ENCODE measurements at regions of chr12 and their contacts with region 1.

Region 1: GRCh38 chr12:53079226-53080117 is at the start of gene SPRYD3:
- DNase-seq: peak; percentile 98
- H3K4me3 Mint-ChIP-seq: peak within 1 kb of the TSS; percentile 86
- H3K27ac Mint-ChIP-seq: peak within 1 kb of the TSS; percentile 83
- H3K4me1 Mint-ChIP-seq: peaks cover 38% of the 10 kb centered on the region
- H3K27me3 Mint-ChIP-seq: no peaks in the 10 kb centered on the region
- total RNA-seq, gene SPRYD3: 31.2 to 31.3 TPM

Region 2: GRCh38 chr12:53054112-53054833 is 25.2 kb before region 1 on chr12:
- CTCF ChIA-PET with region 1: interaction called, 13 read pairs
- POLR2A ChIA-PET with region 1: interaction called, 6 read pairs
- DNase-seq: peak; percentile 94
- H3K4me3 Mint-ChIP-seq: peak overlapping the region; percentile 87
- H3K27ac Mint-ChIP-seq: peak overlapping the region; percentile 77
- H3K4me1 Mint-ChIP-seq: peaks cover 14% of the 10 kb centered on the region
- H3K27me3 Mint-ChIP-seq: no peaks in the 10 kb centered on the region

Region 3: DNA sequence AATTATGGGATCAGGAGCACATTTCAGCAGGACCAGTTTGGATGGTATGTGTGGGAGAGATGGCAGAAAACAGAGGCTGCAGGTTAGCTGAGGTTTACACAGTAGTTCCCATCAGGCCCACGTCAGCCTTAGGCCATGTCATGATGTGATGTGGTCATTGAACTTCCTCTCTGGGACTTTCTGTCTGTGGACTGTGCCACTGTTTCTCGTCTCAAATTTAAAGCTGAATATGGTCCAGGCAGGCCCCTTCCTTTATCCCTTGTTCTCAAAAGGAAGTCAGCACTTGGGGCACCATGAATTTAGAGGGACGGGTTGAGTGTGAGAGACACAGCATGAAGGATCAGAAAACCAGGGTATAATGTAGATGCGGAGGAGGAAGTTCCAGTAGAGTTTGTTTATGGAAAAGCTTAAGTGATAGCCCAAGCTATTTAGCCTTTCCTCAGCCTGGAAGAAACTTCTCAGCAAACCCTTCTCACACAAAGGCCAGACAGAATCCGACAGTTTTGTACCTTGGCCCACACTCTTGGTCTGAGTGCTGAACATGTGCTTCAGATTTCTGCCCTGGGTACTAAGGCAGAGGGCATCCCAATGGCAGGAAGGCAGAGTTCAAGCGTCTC is 14.4 kb after region 1 on chr12:
- CTCF ChIA-PET with region 1: interaction called, 28 read pairs
- POLR2A ChIA-PET with region 1: interaction called, 34 read pairs
- DNase-seq: no peak
- H3K4me3 Mint-ChIP-seq: no peak overlapping the region
- H3K27ac Mint-ChIP-seq: no peak overlapping the region
- H3K4me1 Mint-ChIP-seq: peaks cover 18% of the 10 kb centered on the region
- H3K27me3 Mint-ChIP-seq: peaks cover 22% of the 10 kb centered on the region

Region 4: DNA sequence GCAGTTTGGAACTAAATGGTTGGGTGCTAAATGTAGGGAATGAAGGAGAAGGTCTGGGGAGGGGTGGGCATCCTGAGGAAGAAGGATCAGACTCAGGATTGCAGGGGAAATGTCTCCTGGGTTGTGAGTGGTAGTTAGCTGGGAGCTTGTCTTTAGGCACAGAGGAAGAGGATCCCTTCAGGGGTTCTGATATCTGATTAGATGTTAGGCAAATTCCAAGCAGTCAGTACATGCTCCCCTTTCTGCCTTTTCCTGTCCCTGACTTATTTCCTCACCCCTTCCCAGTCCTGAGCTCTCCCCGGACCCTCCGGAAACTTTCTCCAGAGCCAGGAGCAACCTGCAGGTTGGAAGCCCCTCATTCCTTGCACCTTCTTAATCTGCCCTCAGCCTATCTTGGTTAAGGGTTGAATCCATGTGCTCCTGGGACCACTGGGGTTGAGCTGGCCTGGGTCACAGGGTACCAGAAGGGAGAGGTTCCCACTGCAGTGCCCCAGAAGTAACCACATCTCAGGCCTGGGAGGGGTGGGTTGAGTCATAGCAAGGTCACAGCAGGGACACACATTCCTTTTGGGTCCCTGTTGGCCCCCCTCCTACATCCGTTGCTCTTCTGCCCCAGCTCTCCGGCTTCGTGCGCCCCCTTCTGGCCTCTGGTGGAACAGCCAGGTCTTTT is 19.6 kb after region 1 on chr12:
- CTCF ChIA-PET with region 1: interaction called, 28 read pairs
- POLR2A ChIA-PET with region 1: interaction called, 34 read pairs
- DNase-seq: peak; percentile 90
- H3K4me3 Mint-ChIP-seq: peak overlapping the region; percentile 71
- H3K27ac Mint-ChIP-seq: peak overlapping the region; percentile 69
- H3K4me1 Mint-ChIP-seq: peaks cover 52% of the 10 kb centered on the region
- H3K27me3 Mint-ChIP-seq: peaks cover 15% of the 10 kb centered on the region

Measured in activated CD4-positive, alpha-beta memory T cell treated with anti-CD3 and anti-CD28 coated beads, Interleukin-2, amount 10 ng/mL, durations not matched to agents 7 days and 5 days (primary cell).